Right ventricle myocardium superior (tissue), 1 donor: ENCODE measurements at regions of chr2 and their contacts with region 1.

Region 1: GRCh38 chr2:204691911-204692510 is 146.7 kb downstream of the PARD3B start:
- DNase-seq: no peak
- ATAC-seq: peak; percentile 95

Region 2: DNA sequence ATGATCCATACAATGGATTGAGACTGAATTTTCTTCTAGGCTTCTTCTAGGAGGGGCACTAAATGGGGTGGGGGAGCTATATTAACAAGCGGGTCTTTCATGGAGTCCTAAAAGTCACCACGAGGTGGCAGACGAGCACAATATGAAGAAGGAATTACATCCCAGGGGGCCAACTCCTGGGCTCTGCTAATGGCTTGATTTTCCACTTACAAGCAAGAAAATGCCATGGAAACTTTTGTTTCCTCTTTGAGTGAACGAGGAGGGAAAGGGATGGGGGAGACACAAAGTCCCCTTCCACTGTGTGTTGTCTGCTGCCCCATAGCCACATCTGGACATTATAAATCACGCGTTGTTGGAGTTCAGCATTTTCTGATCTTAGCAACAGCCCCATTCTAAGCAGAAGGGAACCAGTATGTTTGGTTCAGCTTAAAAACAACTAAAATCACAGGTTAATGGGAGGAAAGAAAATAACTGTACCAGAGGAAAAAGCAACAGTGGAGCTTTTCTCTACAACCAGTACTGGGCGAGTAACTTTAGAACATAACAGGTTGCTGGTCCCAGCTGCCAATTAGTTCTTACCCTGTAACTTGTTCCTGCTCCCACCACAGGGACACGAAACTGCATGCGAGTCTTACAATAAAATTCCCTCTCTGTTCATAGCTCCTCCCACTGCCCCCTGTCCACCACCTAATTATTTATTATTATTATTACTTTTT is 431.7 kb before region 1 on chr2:
- intact Hi-C with region 1: loop called (anchors 5 kb)
- DNase-seq: peak; percentile 70
- ATAC-seq: peak; percentile 78

Region 3: DNA sequence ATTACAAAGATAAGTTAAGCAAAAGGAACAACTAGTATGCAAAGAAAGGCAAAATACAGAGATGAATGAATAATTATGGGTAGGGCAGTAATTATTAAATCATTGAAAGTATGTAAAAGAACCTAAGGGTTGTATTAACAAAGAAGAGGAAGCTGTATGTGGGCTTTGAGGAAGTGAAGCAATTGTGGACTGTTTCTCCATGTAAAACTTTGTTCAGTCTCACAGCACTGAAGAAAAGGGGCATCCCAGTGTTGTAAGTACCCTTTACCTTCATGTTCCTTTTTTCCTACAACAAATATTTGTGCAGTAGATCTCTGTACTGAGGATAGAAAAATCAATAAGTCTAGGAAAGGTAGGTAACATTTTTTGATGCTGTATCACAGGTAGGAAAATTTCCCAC is 601.5 kb after region 1 on chr2:
- intact Hi-C with region 1: no loop called
- DNase-seq: no peak
- ATAC-seq: no peak